Caco-2 (cell line): ENCODE measurements at regions of chr5 and their contacts with region 1.

Region 1: GRCh38 chr5:151298063-151298855 is 5.3 kb downstream of the SLC36A3 start:
- DNase-seq: peak; percentile 68 to 75
- H3K4me3 ChIP-seq: no peak overlapping the region
- H3K4me3 Mint-ChIP-seq: no peak overlapping the region
- H3K27ac Mint-ChIP-seq: no peak overlapping the region
- H3K4me1 ChIP-seq: peaks cover 3% of the 10 kb centered on the region; the same call in 1 of the 2 replicates
- H3K4me1 Mint-ChIP-seq: no peaks in the 10 kb centered on the region
- H3K27me3 ChIP-seq: peaks cover 2% of the 10 kb centered on the region; the same call in 1 of the 2 replicates
- H3K27me3 Mint-ChIP-seq: peaks cover 9% of the 10 kb centered on the region
- CTCF ChIP-seq: peak; percentile 64 to 74

Region 2: GRCh38 chr5:151051066-151051930 is 247.0 kb before region 1 on chr5:
- CTCF ChIA-PET with region 1: interaction called, 10 read pairs
- POLR2A ChIA-PET with region 1: no interaction called
- intact Hi-C with region 1: no loop called
- DNase-seq: peak; percentile 72 to 78
- H3K4me3 ChIP-seq: no peak overlapping the region
- H3K4me3 Mint-ChIP-seq: no peak overlapping the region
- H3K27ac Mint-ChIP-seq: peak overlapping the region; percentile 53
- H3K4me1 ChIP-seq: peaks cover 6% of the 10 kb centered on the region; the same call in 1 of the 2 replicates
- H3K4me1 Mint-ChIP-seq: peaks cover 10% of the 10 kb centered on the region
- H3K27me3 ChIP-seq: no peaks in the 10 kb centered on the region
- H3K27me3 Mint-ChIP-seq: no peaks in the 10 kb centered on the region
- CTCF ChIP-seq: peak; percentile 81 to 89

Region 3: DNA sequence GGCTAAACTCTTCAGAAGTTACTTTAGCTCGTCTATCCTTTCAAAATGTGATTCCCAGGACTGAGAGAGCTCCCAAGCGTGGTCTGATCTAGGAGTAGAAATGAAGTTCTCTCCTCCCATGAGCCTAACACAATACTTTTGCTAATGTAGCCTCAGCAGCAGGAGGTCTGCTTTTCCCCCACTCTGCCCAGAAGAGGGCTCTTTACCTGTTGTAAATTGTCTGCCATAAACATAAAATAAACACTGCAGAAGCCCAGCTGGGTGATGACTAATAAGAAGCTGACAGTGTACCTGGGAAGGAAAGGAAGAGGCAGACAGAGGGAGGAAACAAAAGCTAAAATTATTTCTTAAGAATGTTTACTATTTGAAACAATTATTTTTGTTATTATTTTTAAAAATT is 10.1 kb before region 1 on chr5:
- CTCF ChIA-PET with region 1: interaction called, 6 read pairs
- POLR2A ChIA-PET with region 1: no interaction called
- intact Hi-C with region 1: loop called (anchors 1 kb)
- DNase-seq: peak; percentile 50 to 53
- H3K4me3 ChIP-seq: no peak overlapping the region
- H3K4me3 Mint-ChIP-seq: no peak overlapping the region
- H3K27ac Mint-ChIP-seq: no peak overlapping the region
- H3K4me1 ChIP-seq: peaks cover 6% of the 10 kb centered on the region
- H3K4me1 Mint-ChIP-seq: peaks cover 12% of the 10 kb centered on the region
- H3K27me3 ChIP-seq: no peaks in the 10 kb centered on the region
- H3K27me3 Mint-ChIP-seq: no peaks in the 10 kb centered on the region
- CTCF ChIP-seq: peak in 1 of 2 experiments; percentile 67